ENCODE measurements at regions of chr9 and their contacts with region 1.

Region 1: GRCh38 chr9:37913480-37914153 is 9.7 kb upstream of the SLC25A51 start:
- DNase-seq: peak; percentile 77
- H3K4me3 Mint-ChIP-seq: no peak overlapping the region
- H3K27ac Mint-ChIP-seq: no peak overlapping the region
- H3K4me1 Mint-ChIP-seq: peaks cover 14% of the 10 kb centered on the region
- H3K27me3 Mint-ChIP-seq: no peaks in the 10 kb centered on the region
- CTCF ChIP-seq: peak; percentile 97

Region 2: GRCh38 chr9:37531699-37532098 is 381.9 kb before region 1 on chr9:
- CTCF ChIA-PET with region 1: no interaction called
- POLR2A ChIA-PET with region 1: no interaction called
- intact Hi-C with region 1: no loop called
- DNase-seq: no peak
- H3K4me3 Mint-ChIP-seq: no peak overlapping the region
- H3K27ac Mint-ChIP-seq: no peak overlapping the region
- H3K4me1 Mint-ChIP-seq: peaks cover 9% of the 10 kb centered on the region
- H3K27me3 Mint-ChIP-seq: no peaks in the 10 kb centered on the region
- CTCF ChIP-seq: no peak

Region 3: GRCh38 chr9:37840560-37841194 is 72.9 kb before region 1 on chr9:
- CTCF ChIA-PET with region 1: no interaction called
- POLR2A ChIA-PET with region 1: no interaction called
- intact Hi-C with region 1: no loop called
- DNase-seq: peak; percentile 83
- H3K4me3 Mint-ChIP-seq: no peak overlapping the region
- H3K27ac Mint-ChIP-seq: no peak overlapping the region
- H3K4me1 Mint-ChIP-seq: peaks cover 16% of the 10 kb centered on the region
- H3K27me3 Mint-ChIP-seq: no peaks in the 10 kb centered on the region
- CTCF ChIP-seq: no peak

Region 4: DNA sequence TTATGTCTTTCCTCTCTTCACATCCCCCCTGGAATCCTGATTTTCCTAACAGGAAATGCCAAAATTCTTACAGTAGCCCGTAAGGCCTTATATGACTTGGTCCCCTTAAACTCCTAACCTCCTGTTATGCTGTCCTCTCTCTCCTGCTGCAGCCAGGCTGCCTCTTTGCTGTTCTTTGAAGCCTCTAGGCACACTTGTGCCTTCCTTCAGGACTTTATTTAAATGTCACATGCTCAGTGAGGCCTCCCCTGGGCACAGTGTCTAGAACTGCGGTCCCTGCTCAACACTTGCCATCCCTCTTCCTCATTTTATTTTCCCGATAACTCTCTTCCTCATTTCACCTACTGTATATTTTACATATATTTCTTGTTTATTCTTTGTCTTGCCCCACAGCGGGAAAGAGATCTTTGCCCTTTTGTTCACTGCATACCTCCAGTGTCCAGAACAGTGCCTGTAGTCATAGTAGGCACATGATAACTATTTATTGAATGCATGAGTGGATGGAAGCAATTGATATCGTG is 160.9 kb after region 1 on chr9:
- CTCF ChIA-PET with region 1: interaction called, 59 read pairs
- POLR2A ChIA-PET with region 1: interaction called, 3 read pairs
- intact Hi-C with region 1: no loop called
- DNase-seq: no peak
- H3K4me3 Mint-ChIP-seq: no peak overlapping the region
- H3K27ac Mint-ChIP-seq: no peak overlapping the region
- H3K4me1 Mint-ChIP-seq: no peaks in the 10 kb centered on the region
- H3K27me3 Mint-ChIP-seq: no peaks in the 10 kb centered on the region
- CTCF ChIP-seq: no peak

Region 5: DNA sequence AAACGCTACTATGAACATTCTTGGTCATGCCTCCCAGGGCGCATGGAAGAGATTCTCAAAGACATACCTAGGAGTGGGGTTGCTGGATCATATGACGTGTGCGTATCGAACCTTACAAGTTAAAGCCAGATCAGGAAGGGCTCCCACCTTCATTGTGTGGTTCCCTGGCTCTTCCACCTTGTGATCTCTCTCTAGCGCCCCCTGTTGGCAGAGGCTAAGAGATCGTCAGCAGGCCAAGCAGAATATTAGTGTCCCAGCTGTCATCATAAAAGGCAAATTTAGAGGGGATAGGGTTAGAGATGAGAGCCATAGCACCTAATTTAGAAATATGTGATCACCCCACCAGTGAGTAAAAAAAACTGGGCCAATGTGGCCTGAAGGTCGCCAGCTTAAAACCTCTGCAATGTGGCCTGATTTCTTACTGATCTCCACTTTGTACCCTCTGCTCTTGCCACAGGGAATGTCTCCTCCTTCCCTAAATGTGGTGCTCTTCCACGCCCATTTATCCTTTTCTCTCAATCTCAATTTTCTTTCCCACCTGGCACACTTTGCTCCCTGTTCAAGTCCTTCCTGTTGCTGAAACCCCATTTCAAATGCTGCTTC is 247.1 kb after region 1 on chr9:
- CTCF ChIA-PET with region 1: interaction called, 4 read pairs
- POLR2A ChIA-PET with region 1: no interaction called
- intact Hi-C with region 1: loop called (anchors 1 kb)
- DNase-seq: peak; percentile 77
- H3K4me3 Mint-ChIP-seq: no peak overlapping the region
- H3K27ac Mint-ChIP-seq: no peak overlapping the region
- H3K4me1 Mint-ChIP-seq: no peaks in the 10 kb centered on the region
- H3K27me3 Mint-ChIP-seq: no peaks in the 10 kb centered on the region
- CTCF ChIP-seq: peak; percentile 85

Region 6: DNA sequence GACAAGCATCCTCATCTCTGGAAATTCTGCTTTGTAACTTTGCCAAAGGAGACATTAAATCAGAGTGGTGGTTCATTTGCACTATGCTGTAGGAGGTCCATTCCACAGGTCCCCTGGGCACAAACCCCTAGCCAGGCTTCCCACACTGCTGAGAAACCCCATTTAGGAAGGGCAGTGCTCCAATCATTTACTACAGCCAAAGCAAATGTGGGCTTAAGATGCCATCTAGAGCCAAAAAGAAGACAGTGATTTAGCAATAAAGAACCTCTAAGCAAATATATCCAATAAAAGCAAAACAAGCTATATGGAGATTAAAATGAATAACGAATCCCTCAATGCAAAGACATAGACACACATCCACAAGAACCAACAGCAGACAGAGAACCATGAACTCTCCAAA is 349.9 kb after region 1 on chr9:
- CTCF ChIA-PET with region 1: interaction called, 89 read pairs
- POLR2A ChIA-PET with region 1: interaction called, 5 read pairs
- intact Hi-C with region 1: loop called (anchors 1 kb)
- DNase-seq: peak; percentile 43
- H3K4me3 Mint-ChIP-seq: no peak overlapping the region
- H3K27ac Mint-ChIP-seq: no peak overlapping the region
- H3K4me1 Mint-ChIP-seq: no peaks in the 10 kb centered on the region
- H3K27me3 Mint-ChIP-seq: peaks cover 67% of the 10 kb centered on the region
- CTCF ChIP-seq: peak; percentile 48

Region 7: GRCh38 chr9:38362852-38363593 is 449.4 kb after region 1 on chr9:
- CTCF ChIA-PET with region 1: interaction called, 10 read pairs
- POLR2A ChIA-PET with region 1: interaction called, 3 read pairs
- intact Hi-C with region 1: loop called (anchors 1 kb)
- DNase-seq: peak; percentile 74
- H3K4me3 Mint-ChIP-seq: no peak overlapping the region
- H3K27ac Mint-ChIP-seq: no peak overlapping the region
- H3K4me1 Mint-ChIP-seq: peaks cover 8% of the 10 kb centered on the region
- H3K27me3 Mint-ChIP-seq: no peaks in the 10 kb centered on the region
- CTCF ChIP-seq: peak; percentile 66

Region 8: DNA sequence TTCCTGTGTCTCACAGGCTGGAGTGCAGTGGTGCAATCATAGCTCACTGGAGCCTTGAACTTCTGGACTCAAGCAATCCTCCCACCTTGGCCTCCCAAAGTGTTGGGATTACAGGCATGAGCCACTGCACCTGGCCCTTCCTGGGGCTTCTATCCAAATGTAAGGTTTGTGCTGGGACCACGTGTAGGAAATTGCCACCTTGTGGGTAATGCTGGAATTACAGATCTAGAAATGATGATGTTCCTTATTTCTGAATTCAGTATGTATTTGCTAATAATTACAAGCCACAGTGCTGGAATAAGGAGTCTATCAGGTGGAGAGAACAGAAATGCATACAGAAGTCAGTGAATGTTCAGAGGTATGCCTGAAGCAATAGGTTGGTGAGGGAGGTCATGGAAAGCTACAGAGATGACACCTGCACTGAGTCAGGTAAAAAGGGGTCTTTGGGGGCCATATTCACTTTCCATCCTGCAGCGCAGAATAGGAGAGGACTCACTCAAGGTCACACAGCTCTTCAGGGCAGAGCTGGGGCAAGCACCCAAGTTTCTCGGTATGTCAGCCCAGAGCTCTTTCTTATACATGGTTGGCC is 519.4 kb after region 1 on chr9:
- CTCF ChIA-PET with region 1: interaction called, 6 read pairs
- POLR2A ChIA-PET with region 1: no interaction called
- intact Hi-C with region 1: loop called (anchors 2 kb)
- DNase-seq: peak; percentile 49
- H3K4me3 Mint-ChIP-seq: no peak overlapping the region
- H3K27ac Mint-ChIP-seq: no peak overlapping the region
- H3K4me1 Mint-ChIP-seq: no peaks in the 10 kb centered on the region
- H3K27me3 Mint-ChIP-seq: peaks cover 5% of the 10 kb centered on the region
- CTCF ChIP-seq: peak; percentile 43